Activated CD8-positive, alpha-beta T cell treated with anti-CD3 and anti-CD28 coated beads for 36 hours (primary cell): ENCODE measurements at regions of chr15 and their contacts with region 1.

Region 1: GRCh38 chr15:44663409-44664308 is at the start of gene SPG11:
- DNase-seq: peak; percentile 99
- ATAC-seq: peak; percentile 89
- H3K4me3 Mint-ChIP-seq: peak within 1 kb of the TSS; percentile 93
- H3K27ac Mint-ChIP-seq: peak within 1 kb of the TSS; percentile 97
- H3K4me1 Mint-ChIP-seq: peaks cover 59% of the 10 kb centered on the region
- H3K27me3 Mint-ChIP-seq: no peaks in the 10 kb centered on the region
- CTCF ChIP-seq: peak; percentile 86
- total RNA-seq, gene SPG11: 68.6 to 71.5 TPM

Region 2: GRCh38 chr15:44574734-44575133 is 88.9 kb before region 1 on chr15:
- CTCF ChIA-PET with region 1: interaction called, 4 read pairs
- POLR2A ChIA-PET with region 1: interaction called, 5 read pairs
- intact Hi-C with region 1: loop called (anchors 5 kb)
- DNase-seq: no peak
- ATAC-seq: no peak
- H3K4me3 Mint-ChIP-seq: no peak overlapping the region
- H3K27ac Mint-ChIP-seq: peak overlapping the region; percentile 40
- H3K4me1 Mint-ChIP-seq: peaks cover 9% of the 10 kb centered on the region
- H3K27me3 Mint-ChIP-seq: no peaks in the 10 kb centered on the region
- CTCF ChIP-seq: no peak

Region 3: GRCh38 chr15:44676676-44677075 is 13.0 kb after region 1 on chr15:
- CTCF ChIA-PET with region 1: interaction called, 37 read pairs
- POLR2A ChIA-PET with region 1: interaction called, 75 read pairs
- intact Hi-C with region 1: no loop called
- DNase-seq: peak; percentile 73
- ATAC-seq: peak; percentile 69
- H3K4me3 Mint-ChIP-seq: peak overlapping the region; percentile 64
- H3K27ac Mint-ChIP-seq: peak overlapping the region; percentile 90
- H3K4me1 Mint-ChIP-seq: peaks cover 81% of the 10 kb centered on the region
- H3K27me3 Mint-ChIP-seq: no peaks in the 10 kb centered on the region
- CTCF ChIP-seq: no peak

Region 4: GRCh38 chr15:44698641-44699040 is 35.0 kb after region 1 on chr15:
- CTCF ChIA-PET with region 1: interaction called, 7 read pairs
- POLR2A ChIA-PET with region 1: interaction called, 1,862 read pairs
- intact Hi-C with region 1: no loop called
- DNase-seq: no peak
- ATAC-seq: no peak
- H3K4me3 Mint-ChIP-seq: no peak overlapping the region
- H3K27ac Mint-ChIP-seq: no peak overlapping the region
- H3K4me1 Mint-ChIP-seq: peaks cover 29% of the 10 kb centered on the region
- H3K27me3 Mint-ChIP-seq: no peaks in the 10 kb centered on the region
- CTCF ChIP-seq: no peak

Region 5: GRCh38 chr15:44719293-44719999 is 55.8 kb after region 1 on chr15:
- CTCF ChIA-PET with region 1: interaction called, 197 read pairs
- POLR2A ChIA-PET with region 1: interaction called, 1,862 read pairs
- intact Hi-C with region 1: no loop called
- DNase-seq: peak; percentile 89
- ATAC-seq: peak; percentile 72
- H3K4me3 Mint-ChIP-seq: peak overlapping the region; percentile 44
- H3K27ac Mint-ChIP-seq: peak overlapping the region; percentile 96
- H3K4me1 Mint-ChIP-seq: peaks cover 88% of the 10 kb centered on the region
- H3K27me3 Mint-ChIP-seq: no peaks in the 10 kb centered on the region
- CTCF ChIP-seq: no peak

Region 6: GRCh38 chr15:44769521-44769920 is 105.9 kb after region 1 on chr15:
- CTCF ChIA-PET with region 1: no interaction called
- POLR2A ChIA-PET with region 1: no interaction called
- intact Hi-C with region 1: no loop called
- DNase-seq: no peak
- ATAC-seq: no peak
- H3K4me3 Mint-ChIP-seq: no peak overlapping the region
- H3K27ac Mint-ChIP-seq: no peak overlapping the region
- H3K4me1 Mint-ChIP-seq: peaks cover 4% of the 10 kb centered on the region
- H3K27me3 Mint-ChIP-seq: no peaks in the 10 kb centered on the region
- CTCF ChIP-seq: no peak